CD8-positive, alpha-beta T cell (primary cell): ENCODE measurements at regions of chr1 and their contacts with region 1.

Region 1: GRCh38 chr1:27603681-27604578 is at the start of gene AHDC1:
- DNase-seq: peak; percentile 82 to 96 (median 93)
- ATAC-seq: peak; percentile 81
- H3K4me3 ChIP-seq: peak within 1 kb of the TSS; percentile 70 to 86
- H3K4me3 Mint-ChIP-seq: peak within 1 kb of the TSS; percentile 88
- H3K27ac ChIP-seq: peak within 1 kb of the TSS; percentile 57 to 66
- H3K27ac Mint-ChIP-seq: peak within 1 kb of the TSS; percentile 85
- H3K4me1 ChIP-seq: peaks cover 62% of the 10 kb centered on the region
- H3K4me1 Mint-ChIP-seq: peaks cover 41% of the 10 kb centered on the region
- H3K27me3 ChIP-seq: no peaks in the 10 kb centered on the region
- H3K27me3 Mint-ChIP-seq: no peaks in the 10 kb centered on the region
- CTCF ChIP-seq: no peak
- total RNA-seq, gene AHDC1: 19.5 to 21.1 TPM

Region 2: GRCh38 chr1:27300341-27301051 is 303.4 kb before region 1 on chr1:
- CTCF ChIA-PET with region 1: interaction called, 128 read pairs
- POLR2A ChIA-PET with region 1: no interaction called
- intact Hi-C with region 1: loop called (anchors 1 kb)
- DNase-seq: peak; percentile 60 to 90 (median 74)
- ATAC-seq: peak; percentile 99
- H3K4me3 ChIP-seq: no peak overlapping the region
- H3K4me3 Mint-ChIP-seq: no peak overlapping the region
- H3K27ac ChIP-seq: no peak overlapping the region
- H3K27ac Mint-ChIP-seq: no peak overlapping the region
- H3K4me1 ChIP-seq: no peaks in the 10 kb centered on the region
- H3K4me1 Mint-ChIP-seq: peaks cover 6% of the 10 kb centered on the region
- H3K27me3 ChIP-seq: no peaks in the 10 kb centered on the region
- H3K27me3 Mint-ChIP-seq: no peaks in the 10 kb centered on the region
- CTCF ChIP-seq: peak; percentile 84

Region 3: GRCh38 chr1:27357281-27358037 is 246.5 kb before region 1 on chr1:
- CTCF ChIA-PET with region 1: interaction called, 4 read pairs
- POLR2A ChIA-PET with region 1: no interaction called
- intact Hi-C with region 1: loop called (anchors 1 kb)
- DNase-seq: peak; percentile 64 to 93 (median 81)
- ATAC-seq: peak; percentile 78
- H3K4me3 ChIP-seq: peak overlapping the region; percentile 57 to 78
- H3K4me3 Mint-ChIP-seq: peak overlapping the region; percentile 86
- H3K27ac ChIP-seq: peak overlapping the region; percentile 38 to 59
- H3K27ac Mint-ChIP-seq: peak overlapping the region; percentile 89
- H3K4me1 ChIP-seq: peaks cover 46% of the 10 kb centered on the region
- H3K4me1 Mint-ChIP-seq: peaks cover 55% of the 10 kb centered on the region
- H3K27me3 ChIP-seq: no peaks in the 10 kb centered on the region
- H3K27me3 Mint-ChIP-seq: no peaks in the 10 kb centered on the region
- CTCF ChIP-seq: peak; percentile 91

Region 4: GRCh38 chr1:27416387-27417111 is 187.4 kb before region 1 on chr1:
- CTCF ChIA-PET with region 1: interaction called, 29 read pairs
- POLR2A ChIA-PET with region 1: no interaction called
- intact Hi-C with region 1: loop called (anchors 1 kb)
- DNase-seq: peak in 6 of 9 experiments; percentile 30 to 81 (median 57)
- ATAC-seq: peak; percentile 74
- H3K4me3 ChIP-seq: no peak overlapping the region
- H3K4me3 Mint-ChIP-seq: no peak overlapping the region
- H3K27ac ChIP-seq: no peak overlapping the region
- H3K27ac Mint-ChIP-seq: peak overlapping the region; percentile 37
- H3K4me1 ChIP-seq: peaks cover 19% of the 10 kb centered on the region
- H3K4me1 Mint-ChIP-seq: peaks cover 33% of the 10 kb centered on the region
- H3K27me3 ChIP-seq: no peaks in the 10 kb centered on the region
- H3K27me3 Mint-ChIP-seq: no peaks in the 10 kb centered on the region
- CTCF ChIP-seq: peak; percentile 56

Region 5: DNA sequence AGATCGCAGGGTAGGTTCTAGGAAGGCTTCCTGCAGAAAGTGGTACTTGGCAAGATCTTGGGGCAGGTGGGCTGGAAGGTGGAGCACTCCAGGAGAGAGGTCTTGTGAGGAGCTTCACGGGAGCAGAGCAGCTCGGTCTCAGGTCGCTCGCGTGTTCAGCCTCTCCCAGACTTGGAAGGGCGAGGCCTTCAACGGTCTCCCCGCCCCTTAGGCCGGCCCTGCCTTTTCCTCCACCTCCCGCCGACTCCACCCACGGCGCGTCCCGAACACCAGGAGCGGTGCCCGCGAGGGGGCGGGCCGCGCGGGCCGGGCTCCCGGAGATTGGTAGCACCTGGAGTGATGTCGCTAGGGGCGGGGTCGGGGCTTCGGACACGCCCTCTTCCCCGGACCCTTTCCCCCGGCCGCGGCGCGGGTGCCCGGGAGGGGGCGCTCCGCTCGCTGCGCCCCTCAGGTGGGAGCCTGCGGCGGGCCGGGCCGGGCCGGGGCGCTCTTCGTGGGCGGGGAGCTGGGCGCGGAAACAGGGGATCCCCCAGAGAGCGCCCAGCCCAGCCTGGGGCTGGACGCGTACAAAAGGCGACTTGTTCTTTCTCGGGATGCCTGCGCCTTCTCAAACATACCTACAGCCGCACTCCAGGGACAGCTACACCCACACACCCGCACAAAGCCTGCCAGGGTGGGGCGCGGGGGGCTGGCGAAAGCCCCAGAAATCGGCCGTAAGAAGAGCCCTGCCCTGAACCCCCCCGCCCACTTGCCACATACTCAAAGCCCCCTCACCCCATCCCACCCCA is 35.4 kb before region 1 on chr1:
- CTCF ChIA-PET with region 1: interaction called, 25 read pairs
- POLR2A ChIA-PET with region 1: interaction called, 4 read pairs
- intact Hi-C with region 1: loop called (anchors 1 kb)
- DNase-seq: peak; percentile 80 to 96 (median 91)
- ATAC-seq: peak; percentile 92
- H3K4me3 ChIP-seq: peak overlapping the region; percentile 28 to 36
- H3K4me3 Mint-ChIP-seq: peak overlapping the region; percentile 78
- H3K27ac ChIP-seq: peak overlapping the region in 1 of 2 experiments; percentile 58
- H3K27ac Mint-ChIP-seq: peak overlapping the region; percentile 39
- H3K4me1 ChIP-seq: peaks cover 16% of the 10 kb centered on the region
- H3K4me1 Mint-ChIP-seq: peaks cover 25% of the 10 kb centered on the region
- H3K27me3 ChIP-seq: no peaks in the 10 kb centered on the region
- H3K27me3 Mint-ChIP-seq: no peaks in the 10 kb centered on the region
- CTCF ChIP-seq: peak; percentile 71

Region 6: GRCh38 chr1:27662707-27663393 is 58.9 kb after region 1 on chr1:
- CTCF ChIA-PET with region 1: interaction called, 405 read pairs
- POLR2A ChIA-PET with region 1: interaction called, 40 read pairs
- intact Hi-C with region 1: loop called (anchors 1 kb)
- DNase-seq: peak; percentile 82 to 96 (median 90)
- ATAC-seq: peak; percentile 72
- H3K4me3 ChIP-seq: peak overlapping the region; percentile 50 to 59
- H3K4me3 Mint-ChIP-seq: peak overlapping the region; percentile 81
- H3K27ac ChIP-seq: peak overlapping the region; percentile 87 to 95
- H3K27ac Mint-ChIP-seq: peak overlapping the region; percentile 97
- H3K4me1 ChIP-seq: peaks cover 46% of the 10 kb centered on the region
- H3K4me1 Mint-ChIP-seq: peaks cover 46% of the 10 kb centered on the region
- H3K27me3 ChIP-seq: no peaks in the 10 kb centered on the region
- H3K27me3 Mint-ChIP-seq: no peaks in the 10 kb centered on the region
- CTCF ChIP-seq: peak; percentile 74

Region 7: GRCh38 chr1:27772933-27773825 is 169.2 kb after region 1 on chr1 and contains the start of gene STX12:
- CTCF ChIA-PET with region 1: interaction called, 3 read pairs
- POLR2A ChIA-PET with region 1: no interaction called
- intact Hi-C with region 1: loop called in 1 of 2 experiments (anchors 5 kb)
- DNase-seq: peak; percentile 96 to 100 (median 98)
- ATAC-seq: peak; percentile 91
- H3K4me3 ChIP-seq: peak within 1 kb of the TSS; percentile 94 to 98
- H3K4me3 Mint-ChIP-seq: peak within 1 kb of the TSS; percentile 91
- H3K27ac ChIP-seq: peak within 1 kb of the TSS; percentile 76 to 94
- H3K27ac Mint-ChIP-seq: peak within 1 kb of the TSS; percentile 98
- H3K4me1 ChIP-seq: peaks cover 16% of the 10 kb centered on the region
- H3K4me1 Mint-ChIP-seq: peaks cover 37% of the 10 kb centered on the region
- H3K27me3 ChIP-seq: no peaks in the 10 kb centered on the region
- H3K27me3 Mint-ChIP-seq: no peaks in the 10 kb centered on the region
- CTCF ChIP-seq: no peak
- total RNA-seq, gene STX12: 21.0 to 26.0 TPM